Activated CD4-positive, alpha-beta T cell treated with anti-CD3 and anti-CD28 coated beads, Interleukin-2, amount 10 ng/mL, durations not matched to agents 7 days and 5 days (primary cell): ENCODE measurements at regions of chr1 and their contacts with region 1.

Region 1: GRCh38 chr1:32063261-32063681 is 9.5 kb upstream of the TMEM39B start:
- DNase-seq: no peak
- H3K4me3 Mint-ChIP-seq: no peak overlapping the region
- H3K27ac Mint-ChIP-seq: peak overlapping the region; percentile 72
- H3K4me1 Mint-ChIP-seq: peaks cover 19% of the 10 kb centered on the region
- H3K27me3 Mint-ChIP-seq: no peaks in the 10 kb centered on the region

Region 2: DNA sequence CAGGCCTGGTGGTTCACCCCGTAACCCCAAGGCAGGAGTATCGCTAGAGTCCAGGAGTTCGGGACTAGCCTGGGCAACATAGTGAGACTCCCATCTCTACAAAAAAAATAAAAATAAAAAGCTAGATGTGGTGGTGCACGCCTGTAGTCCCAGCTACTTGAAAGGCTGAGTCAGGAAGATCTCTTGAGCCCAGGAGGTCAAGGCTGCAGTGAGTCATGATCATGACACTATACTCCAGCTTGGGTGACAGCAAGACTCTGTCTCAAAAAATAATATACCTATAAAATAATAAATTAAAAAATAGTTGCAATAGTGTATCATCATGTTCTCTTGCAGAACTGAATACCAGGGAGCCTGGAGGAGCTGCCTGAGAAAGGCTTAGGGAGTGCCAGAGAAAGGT is 10.4 kb before region 1 on chr1:
- CTCF ChIA-PET with region 1: interaction called, 10 read pairs
- POLR2A ChIA-PET with region 1: interaction called, 18 read pairs
- DNase-seq: no peak
- H3K4me3 Mint-ChIP-seq: no peak overlapping the region
- H3K27ac Mint-ChIP-seq: no peak overlapping the region
- H3K4me1 Mint-ChIP-seq: no peaks in the 10 kb centered on the region
- H3K27me3 Mint-ChIP-seq: no peaks in the 10 kb centered on the region

Region 3: DNA sequence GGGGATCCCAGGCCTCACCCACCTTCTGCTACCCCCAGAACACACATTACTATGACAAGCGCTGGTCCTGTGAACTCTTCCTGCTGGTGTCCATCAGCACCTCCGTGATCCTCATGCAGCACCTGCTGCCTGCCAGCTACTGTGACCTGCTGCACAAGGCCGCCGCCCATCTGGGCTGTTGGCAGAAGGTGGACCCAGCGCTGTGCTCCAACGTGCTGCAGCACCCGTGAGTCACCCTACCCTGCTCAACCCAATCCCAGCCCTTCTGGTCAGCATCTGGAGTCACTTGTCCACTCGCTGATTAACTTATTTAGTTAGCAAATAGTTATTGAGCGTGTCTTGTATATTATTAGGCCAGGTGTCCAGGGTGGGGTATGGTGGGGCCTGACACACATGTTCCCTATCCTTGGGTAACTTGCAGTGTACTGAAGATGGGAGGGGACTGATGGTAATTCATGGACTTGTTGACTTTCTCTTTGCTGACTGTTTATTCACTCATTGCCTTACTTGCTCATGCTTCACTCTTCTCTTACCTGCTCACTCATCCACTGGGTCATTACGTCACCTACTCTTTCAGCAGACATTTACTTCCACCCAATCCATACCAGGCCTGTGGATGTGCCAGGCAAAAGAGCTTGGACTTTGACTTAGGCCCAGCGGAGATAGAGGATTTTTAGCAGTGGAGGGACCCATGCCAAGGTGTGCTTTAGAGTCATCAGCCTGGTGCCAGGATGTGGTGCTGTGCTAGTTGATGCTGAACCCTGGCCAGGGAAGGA is 31.7 kb after region 1 on chr1:
- CTCF ChIA-PET with region 1: no interaction called
- POLR2A ChIA-PET with region 1: no interaction called
- DNase-seq: no peak
- H3K4me3 Mint-ChIP-seq: no peak overlapping the region
- H3K27ac Mint-ChIP-seq: no peak overlapping the region
- H3K4me1 Mint-ChIP-seq: no peaks in the 10 kb centered on the region
- H3K27me3 Mint-ChIP-seq: no peaks in the 10 kb centered on the region

Region 4: GRCh38 chr1:32172621-32173245 is 109.5 kb after region 1 on chr1:
- CTCF ChIA-PET with region 1: no interaction called
- POLR2A ChIA-PET with region 1: no interaction called
- DNase-seq: no peak
- H3K4me3 Mint-ChIP-seq: no peak overlapping the region
- H3K27ac Mint-ChIP-seq: no peak overlapping the region
- H3K4me1 Mint-ChIP-seq: peaks cover 17% of the 10 kb centered on the region
- H3K27me3 Mint-ChIP-seq: no peaks in the 10 kb centered on the region